ENCODE measurements at regions of chr1 and their contacts with region 1.

Region 1: DNA sequence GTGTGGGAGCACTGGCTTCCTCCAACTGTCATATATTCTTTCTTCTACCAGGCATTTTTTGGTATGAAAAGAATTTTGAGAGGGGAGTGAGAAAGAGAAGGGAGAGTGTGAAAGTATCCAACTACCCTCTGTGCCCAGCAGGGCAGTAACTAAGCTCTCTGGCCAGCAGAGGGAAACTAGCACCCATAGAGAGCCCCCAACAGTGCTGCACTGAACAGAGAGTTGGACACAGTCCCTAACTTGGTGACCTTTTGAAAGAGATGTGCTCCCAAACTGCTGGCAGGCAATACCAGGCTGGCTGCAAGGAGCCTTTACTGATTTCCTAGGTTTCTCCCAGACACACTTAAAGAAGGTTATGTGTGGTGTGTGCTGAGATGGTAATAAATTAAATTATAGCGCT is 118.8 kb upstream of the PBX1 start:
- DNase-seq: peak in 1 of 2 donors; percentile 20
- ATAC-seq: peak in 1 of 2 donors; percentile 76
- H3K4me3 ChIP-seq: no peak overlapping the region
- H3K27ac ChIP-seq: no peak overlapping the region
- H3K4me1 ChIP-seq: peaks cover 5 to 11% of the 10 kb centered on the region in 2 donors
- H3K27me3 ChIP-seq: no peaks in the 10 kb centered on the region
- CTCF ChIP-seq: peak in 2 of 5 experiments; percentile 9 to 43
- POLR2A ChIP-seq: no peak

Region 2: GRCh38 chr1:164310166-164310565 is 130.1 kb before region 1 on chr1:
- in situ Hi-C with region 1: no loop called
- intact Hi-C with region 1: no loop called
- DNase-seq: no peak
- ATAC-seq: no peak
- H3K4me3 ChIP-seq: no peak overlapping the region
- H3K27ac ChIP-seq: no peak overlapping the region
- H3K4me1 ChIP-seq: no peaks in the 10 kb centered on the region
- H3K27me3 ChIP-seq: no peaks in the 10 kb centered on the region
- CTCF ChIP-seq: no peak
- POLR2A ChIP-seq: no peak

Region 3: DNA sequence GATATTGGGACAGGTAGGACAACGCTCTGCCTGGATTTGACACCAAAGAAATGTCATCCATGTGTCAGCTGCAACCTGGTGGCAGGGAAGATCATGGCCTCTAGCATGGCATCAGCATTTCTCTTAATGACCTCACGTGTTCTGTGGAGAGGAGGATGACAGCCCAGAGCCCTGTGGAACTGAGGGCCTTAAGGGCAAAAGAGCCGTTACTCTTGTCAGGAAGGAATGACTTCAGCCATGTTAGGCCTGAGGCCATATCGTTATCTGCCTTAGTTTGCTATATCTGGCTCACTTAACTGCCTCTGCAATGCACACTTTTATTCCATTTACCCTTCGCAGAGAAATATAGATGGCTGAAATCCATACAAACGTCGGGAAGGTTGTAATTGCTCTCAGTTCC is 35.6 kb after region 1 on chr1:
- in situ Hi-C with region 1: no loop called
- intact Hi-C with region 1: loop called (anchors 1 kb)
- DNase-seq: no peak
- ATAC-seq: no peak
- H3K4me3 ChIP-seq: no peak overlapping the region
- H3K27ac ChIP-seq: no peak overlapping the region
- H3K4me1 ChIP-seq: peaks cover 0 to 6% of the 10 kb centered on the region in 2 donors
- H3K27me3 ChIP-seq: no peaks in the 10 kb centered on the region
- CTCF ChIP-seq: no peak
- POLR2A ChIP-seq: no peak

Region 4: DNA sequence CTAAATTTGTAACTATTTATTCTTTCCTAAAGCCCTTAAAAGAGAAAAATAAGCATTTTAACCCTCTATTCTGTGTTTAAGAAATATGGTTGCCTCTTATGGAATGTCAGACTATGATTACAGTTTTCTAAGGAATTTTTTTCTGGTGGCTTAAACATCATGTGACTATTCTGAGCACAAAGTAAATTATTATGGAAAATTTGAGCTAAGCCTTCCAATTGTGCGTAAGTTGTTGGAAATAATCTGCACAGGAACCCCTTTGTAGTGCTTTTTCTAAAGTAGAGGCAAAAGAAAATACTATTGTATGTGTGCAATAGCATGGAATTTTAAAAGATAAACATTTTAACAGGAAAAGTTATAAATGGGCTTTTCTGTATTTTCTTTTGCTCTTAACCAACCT is 373.5 kb after region 1 on chr1:
- in situ Hi-C with region 1: no loop called
- intact Hi-C with region 1: loop called (anchors 5 kb)
- DNase-seq: no peak
- ATAC-seq: no peak
- H3K4me3 ChIP-seq: no peak overlapping the region
- H3K27ac ChIP-seq: no peak overlapping the region
- H3K4me1 ChIP-seq: no peaks in the 10 kb centered on the region
- H3K27me3 ChIP-seq: no peaks in the 10 kb centered on the region
- CTCF ChIP-seq: no peak
- POLR2A ChIP-seq: no peak